ENCODE measurements at regions of chr14 and their contacts with region 1.

Region 1: GRCh38 chr14:102437997-102438915 is 71.3 kb downstream of the ANKRD9 start:
- DNase-seq: no peak
- H3K4me3 ChIP-seq: peak overlapping the region; percentile 32; the same call in 1 of the 2 replicates
- CTCF ChIP-seq: peak; percentile 89

Region 2: GRCh38 chr14:102394717-102395375 is 43.4 kb before region 1 on chr14:
- CTCF ChIA-PET with region 1: interaction called, 13 read pairs
- POLR2A ChIA-PET with region 1: no interaction called
- DNase-seq: no peak
- H3K4me3 ChIP-seq: no peak overlapping the region
- CTCF ChIP-seq: no peak

Region 3: DNA sequence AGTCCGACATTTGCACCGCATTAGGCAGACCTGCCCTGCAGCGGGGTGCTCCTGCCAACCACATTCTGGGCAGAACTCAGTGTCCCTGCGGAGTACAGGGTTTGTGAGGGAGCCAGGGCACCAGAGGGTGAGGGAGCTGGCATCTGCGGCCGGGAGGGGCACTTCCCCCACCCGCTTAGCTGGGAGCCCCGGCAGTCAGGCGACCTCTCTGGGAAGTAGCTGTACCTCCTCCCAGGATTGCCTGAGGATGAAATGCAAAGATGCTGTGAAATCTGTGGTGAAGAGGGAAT is 12.8 kb after region 1 on chr14:
- CTCF ChIA-PET with region 1: interaction called, 117 read pairs
- POLR2A ChIA-PET with region 1: no interaction called
- DNase-seq: no peak
- H3K4me3 ChIP-seq: no peak overlapping the region
- CTCF ChIP-seq: no peak

Region 4: GRCh38 chr14:102500158-102500662 is 62.0 kb after region 1 on chr14:
- CTCF ChIA-PET with region 1: interaction called, 10 read pairs
- POLR2A ChIA-PET with region 1: no interaction called
- DNase-seq: no peak
- H3K4me3 ChIP-seq: no peak overlapping the region
- CTCF ChIP-seq: no peak

Region 5: DNA sequence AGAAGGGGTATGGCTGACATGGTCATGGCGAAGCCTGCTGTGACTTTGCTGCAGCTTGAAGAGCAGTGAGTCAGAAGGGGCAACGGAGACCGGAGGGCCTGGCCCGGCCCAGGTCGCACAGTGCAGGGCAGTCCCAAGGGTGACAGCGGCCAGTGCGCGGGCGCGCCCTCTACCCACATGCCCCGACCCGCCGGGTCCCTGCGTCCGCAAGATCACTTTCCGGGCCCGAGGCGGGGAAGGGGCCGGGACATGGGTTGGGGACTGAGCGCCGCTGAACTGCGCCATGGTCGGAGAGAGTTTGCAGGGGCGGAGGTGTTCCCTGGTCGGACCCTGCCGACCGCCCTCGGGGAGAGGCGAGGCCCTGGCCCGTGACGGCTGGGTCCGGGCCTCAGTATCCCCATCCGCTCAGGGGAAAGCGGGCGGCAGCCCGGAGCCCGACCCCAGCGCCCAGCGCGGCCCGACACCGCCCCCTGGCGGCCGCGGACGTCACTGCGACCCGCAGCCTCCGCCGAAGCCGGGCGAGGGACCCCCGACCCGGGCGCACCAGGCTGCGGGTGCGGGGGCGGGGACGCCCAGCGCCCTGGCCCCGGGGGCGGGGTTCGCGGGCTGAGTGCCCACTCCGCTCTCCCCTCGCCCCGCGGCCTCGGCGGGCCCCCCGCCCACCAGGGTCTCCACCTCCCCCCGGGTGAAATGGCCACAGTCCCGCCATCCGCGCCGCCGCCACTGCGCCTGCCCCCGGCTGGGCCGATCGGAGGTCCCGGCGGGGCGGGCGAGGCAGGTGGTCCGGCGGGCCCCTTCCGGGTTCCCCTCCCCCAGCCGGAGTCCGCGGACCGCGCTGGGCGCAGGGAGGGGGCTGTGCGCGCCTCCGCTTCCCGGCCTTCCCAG is 78.5 kb after region 1 on chr14:
- CTCF ChIA-PET with region 1: interaction called, 77 read pairs
- POLR2A ChIA-PET with region 1: interaction called, 3 read pairs
- DNase-seq: no peak
- H3K4me3 ChIP-seq: peak overlapping the region; percentile 63
- CTCF ChIP-seq: peak; percentile 60

Region 6: DNA sequence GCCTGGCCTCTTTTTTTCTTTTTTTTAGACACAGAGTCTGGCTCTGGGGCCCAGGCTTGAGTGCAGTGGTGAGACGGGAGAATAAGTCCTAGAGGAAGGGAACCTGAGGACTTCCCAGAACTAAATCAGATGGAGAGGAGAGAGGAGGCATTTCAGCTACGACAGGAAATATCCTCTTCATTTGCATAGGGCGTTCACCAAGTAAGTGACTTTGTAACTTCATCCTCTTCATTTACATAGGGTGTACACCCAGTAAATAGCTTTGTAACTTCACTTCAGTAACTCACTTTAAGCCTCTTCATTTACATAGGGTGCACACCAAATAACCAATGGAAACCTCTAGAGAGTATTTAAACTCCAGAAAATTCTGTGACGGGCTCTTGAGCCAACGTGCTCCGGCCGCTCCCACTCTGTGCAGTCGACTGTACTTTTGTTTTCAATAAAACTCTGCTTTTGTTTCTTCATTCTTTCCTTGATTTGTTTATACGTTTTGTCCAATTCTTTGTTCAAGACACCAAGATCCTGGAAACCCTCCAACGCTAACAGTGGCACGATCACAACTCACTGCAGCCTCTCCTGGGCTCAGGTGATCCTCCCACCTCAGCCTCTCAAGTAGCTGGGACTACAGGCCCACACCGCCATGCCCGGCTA is 92.7 kb after region 1 on chr14:
- CTCF ChIA-PET with region 1: interaction called, 29 read pairs
- POLR2A ChIA-PET with region 1: no interaction called
- DNase-seq: no peak
- H3K4me3 ChIP-seq: no peak overlapping the region
- CTCF ChIP-seq: no peak

Measured in AG04449 (cell line).